ENCODE measurements at regions of chr6 and their contacts with region 1.

Region 1: GRCh38 chr6:154733012-154733625 is at the start of gene SCAF8:
- DNase-seq: peak; percentile 97
- H3K4me3 Mint-ChIP-seq: peak within 1 kb of the TSS; percentile 89
- H3K27ac Mint-ChIP-seq: peak within 1 kb of the TSS; percentile 99
- H3K4me1 Mint-ChIP-seq: peaks cover 34% of the 10 kb centered on the region
- H3K27me3 Mint-ChIP-seq: no peaks in the 10 kb centered on the region
- total RNA-seq, gene SCAF8: 36.6 and 37.5 TPM in 2 replicates

Region 2: GRCh38 chr6:154606457-154606856 is 126.7 kb before region 1 on chr6:
- intact Hi-C with region 1: loop called (anchors 1 kb)
- DNase-seq: peak; percentile 86
- H3K4me3 Mint-ChIP-seq: peak overlapping the region; percentile 57
- H3K27ac Mint-ChIP-seq: peak overlapping the region; percentile 82
- H3K4me1 Mint-ChIP-seq: peaks cover 34% of the 10 kb centered on the region
- H3K27me3 Mint-ChIP-seq: no peaks in the 10 kb centered on the region

Region 3: DNA sequence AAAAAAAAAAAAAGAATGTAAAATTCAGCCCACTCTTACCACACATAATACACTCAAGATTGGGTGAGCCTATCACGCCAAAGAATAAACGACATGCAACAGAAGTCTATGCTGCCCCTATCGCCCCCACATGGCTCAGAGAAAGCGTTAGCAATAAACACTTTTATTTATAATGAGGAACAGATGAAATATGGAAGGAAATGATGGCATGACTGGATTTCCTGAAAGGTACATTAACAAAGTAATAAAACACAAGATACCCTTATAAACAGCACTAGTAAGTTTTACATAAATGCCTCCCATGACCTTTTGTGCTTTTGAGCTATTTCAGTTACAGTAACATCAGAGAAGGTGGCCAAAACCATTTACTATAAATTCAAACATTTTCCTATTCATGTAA is 71.4 kb before region 1 on chr6:
- intact Hi-C with region 1: no loop called
- DNase-seq: no peak
- H3K4me3 Mint-ChIP-seq: no peak overlapping the region
- H3K27ac Mint-ChIP-seq: no peak overlapping the region
- H3K4me1 Mint-ChIP-seq: no peaks in the 10 kb centered on the region
- H3K27me3 Mint-ChIP-seq: peaks cover 9% of the 10 kb centered on the region

Region 4: DNA sequence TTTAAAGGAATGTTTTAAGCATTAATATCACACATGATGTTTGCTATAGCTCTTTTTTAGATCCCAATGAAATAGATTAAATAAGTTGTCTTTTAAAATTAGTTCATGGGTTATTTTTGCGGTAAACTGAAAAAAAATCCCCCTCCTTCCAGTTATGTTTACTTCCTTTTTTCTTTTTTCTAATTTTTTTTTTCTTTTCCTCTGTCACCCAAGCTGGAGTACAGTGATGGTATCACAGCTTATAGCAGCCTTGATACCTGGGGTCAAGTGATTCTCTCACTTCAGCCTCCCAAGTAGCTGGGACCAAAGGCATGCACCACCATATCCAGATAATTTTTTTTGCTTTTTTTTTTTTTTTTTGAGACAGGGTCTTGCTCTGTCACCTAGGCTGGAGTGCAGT is 17.7 kb before region 1 on chr6:
- intact Hi-C with region 1: no loop called
- DNase-seq: no peak
- H3K4me3 Mint-ChIP-seq: no peak overlapping the region
- H3K27ac Mint-ChIP-seq: no peak overlapping the region
- H3K4me1 Mint-ChIP-seq: no peaks in the 10 kb centered on the region
- H3K27me3 Mint-ChIP-seq: peaks cover 2% of the 10 kb centered on the region

Region 5: GRCh38 chr6:154749341-154749740 is 16.2 kb after region 1 on chr6:
- intact Hi-C with region 1: loop called (anchors 2 kb)
- DNase-seq: no peak
- H3K4me3 Mint-ChIP-seq: no peak overlapping the region
- H3K27ac Mint-ChIP-seq: no peak overlapping the region
- H3K4me1 Mint-ChIP-seq: peaks cover 15% of the 10 kb centered on the region
- H3K27me3 Mint-ChIP-seq: no peaks in the 10 kb centered on the region

Region 6: GRCh38 chr6:154805288-154805911 is 72.3 kb after region 1 on chr6:
- intact Hi-C with region 1: loop called (anchors 1 kb)
- DNase-seq: no peak
- H3K4me3 Mint-ChIP-seq: no peak overlapping the region
- H3K27ac Mint-ChIP-seq: no peak overlapping the region
- H3K4me1 Mint-ChIP-seq: peaks cover 4% of the 10 kb centered on the region
- H3K27me3 Mint-ChIP-seq: no peaks in the 10 kb centered on the region

Region 7: DNA sequence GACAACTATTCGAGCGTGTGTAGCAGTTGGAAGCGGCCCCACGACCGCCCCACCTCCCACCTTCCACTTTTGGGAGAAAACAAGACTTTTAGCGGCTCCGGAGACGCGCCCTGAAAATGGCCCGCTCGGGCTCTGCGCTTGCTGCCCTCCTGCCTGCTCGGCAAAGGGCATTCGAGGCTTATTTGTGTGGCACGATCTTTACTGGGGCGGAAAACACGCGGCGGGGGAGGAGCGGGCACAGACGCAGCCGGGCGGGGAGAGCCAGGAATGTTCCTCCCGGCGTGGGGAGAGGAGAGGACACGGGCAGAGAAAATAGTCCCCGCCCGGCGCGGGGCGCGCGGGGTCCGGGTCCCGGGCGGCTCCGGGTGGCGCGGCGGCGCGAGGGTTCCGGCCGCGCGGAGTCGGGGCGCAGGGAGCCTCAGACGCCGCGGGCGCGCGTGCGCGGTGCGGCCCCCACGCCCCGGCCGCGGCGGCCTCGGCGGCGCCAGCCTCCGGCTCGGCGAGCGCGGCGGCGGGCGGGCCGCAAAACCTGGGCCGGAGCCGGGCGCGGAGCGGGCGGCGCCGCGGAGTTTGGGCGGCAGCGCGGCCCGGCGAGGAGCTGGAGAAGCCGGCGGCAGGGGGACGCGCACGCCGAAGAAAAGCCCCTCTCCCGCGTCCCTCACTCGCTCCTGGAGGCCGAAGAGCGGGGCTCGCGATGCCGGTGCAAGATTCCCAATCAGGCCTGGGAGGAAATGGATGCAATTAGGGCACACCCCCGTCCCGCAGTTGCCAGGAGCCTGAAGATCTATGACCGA is 1954.1 kb after region 1 on chr6:
- intact Hi-C with region 1: loop called (anchors 5 kb)
- DNase-seq: peak; percentile 94
- H3K4me3 Mint-ChIP-seq: peak overlapping the region; percentile 89
- H3K27ac Mint-ChIP-seq: peak overlapping the region; percentile 94
- H3K4me1 Mint-ChIP-seq: peaks cover 20% of the 10 kb centered on the region
- H3K27me3 Mint-ChIP-seq: peaks cover 11% of the 10 kb centered on the region

Measured in activated CD4-positive, alpha-beta T cell treated with anti-CD3 and anti-CD28 coated beads, Interleukin-2, amount 10 ng/mL, durations not matched to agents 24 days and 14 days (primary cell).